Ascending aorta (tissue), 2 donors: ENCODE measurements at regions of chr12 and their contacts with region 1.

Region 1: DNA sequence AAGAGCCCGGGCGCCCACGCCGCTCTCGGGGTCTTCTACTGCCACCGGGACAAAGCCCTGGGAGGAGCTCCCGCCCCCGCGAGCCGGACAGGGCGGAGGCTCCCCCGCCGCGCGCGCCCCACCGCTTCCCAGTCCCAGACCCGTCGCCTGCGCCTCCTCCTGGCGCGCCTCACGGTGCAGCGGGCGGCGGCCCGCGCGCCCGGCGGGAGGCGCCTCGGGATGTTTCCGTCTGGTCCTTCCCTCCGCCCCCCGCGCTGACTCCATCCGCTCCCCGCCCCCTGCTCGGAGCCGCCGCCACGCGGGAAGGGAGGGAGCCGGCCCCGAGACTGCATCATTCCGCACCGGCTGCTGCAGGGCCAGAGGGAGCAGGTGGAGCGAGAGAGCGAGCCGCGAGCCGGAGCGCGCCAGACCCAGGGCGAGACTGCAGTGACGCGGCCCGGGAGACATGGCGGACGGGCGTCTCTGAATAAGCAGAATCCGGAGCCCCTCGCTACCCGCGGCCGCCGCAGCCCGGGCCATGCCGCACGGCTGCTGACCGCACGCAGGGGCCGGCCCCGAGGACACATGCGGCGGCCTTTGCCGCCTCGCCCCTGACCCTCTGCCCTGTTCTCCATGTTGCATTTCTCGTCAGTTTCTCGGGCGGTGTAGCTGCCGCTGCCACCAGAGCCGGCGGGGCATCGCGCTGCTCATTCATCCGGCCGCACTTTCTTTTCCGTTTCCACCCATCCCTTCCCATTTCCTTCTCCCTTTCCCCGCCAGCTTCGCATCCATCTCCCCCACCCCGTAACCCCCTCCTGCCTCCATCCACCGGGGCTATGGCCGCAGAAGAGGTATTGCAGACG is at the start of gene BICD1:
- DNase-seq: peak; percentile 68 to 96
- H3K4me3 ChIP-seq: peak within 1 kb of the TSS; percentile 76 to 99
- H3K27ac ChIP-seq: peak within 1 kb of the TSS; percentile 86 to 95
- H3K4me1 ChIP-seq: peaks cover 0 to 5% of the 10 kb centered on the region in 2 donors
- H3K27me3 ChIP-seq: no peaks in the 10 kb centered on the region
- CTCF ChIP-seq: peak; percentile 29 to 37 (median 33)
- total RNA-seq, gene BICD1: 33.8 TPM

Region 2: GRCh38 chr12:31659087-31659933 is 447.4 kb before region 1 on chr12 and contains the start of gene ETFBKMT:
- intact Hi-C with region 1: loop called (anchors 5 kb)
- DNase-seq: peak; percentile 67 to 94
- H3K4me3 ChIP-seq: peak within 1 kb of the TSS; percentile 68 to 82
- H3K27ac ChIP-seq: peak within 1 kb of the TSS; percentile 87 to 95
- H3K4me1 ChIP-seq: peaks cover 0 to 3% of the 10 kb centered on the region in 2 donors
- H3K27me3 ChIP-seq: no peaks in the 10 kb centered on the region
- CTCF ChIP-seq: peak in 2 of 3 experiments; percentile 27 to 50
- total RNA-seq, gene ETFBKMT: 0.64 TPM

Region 3: DNA sequence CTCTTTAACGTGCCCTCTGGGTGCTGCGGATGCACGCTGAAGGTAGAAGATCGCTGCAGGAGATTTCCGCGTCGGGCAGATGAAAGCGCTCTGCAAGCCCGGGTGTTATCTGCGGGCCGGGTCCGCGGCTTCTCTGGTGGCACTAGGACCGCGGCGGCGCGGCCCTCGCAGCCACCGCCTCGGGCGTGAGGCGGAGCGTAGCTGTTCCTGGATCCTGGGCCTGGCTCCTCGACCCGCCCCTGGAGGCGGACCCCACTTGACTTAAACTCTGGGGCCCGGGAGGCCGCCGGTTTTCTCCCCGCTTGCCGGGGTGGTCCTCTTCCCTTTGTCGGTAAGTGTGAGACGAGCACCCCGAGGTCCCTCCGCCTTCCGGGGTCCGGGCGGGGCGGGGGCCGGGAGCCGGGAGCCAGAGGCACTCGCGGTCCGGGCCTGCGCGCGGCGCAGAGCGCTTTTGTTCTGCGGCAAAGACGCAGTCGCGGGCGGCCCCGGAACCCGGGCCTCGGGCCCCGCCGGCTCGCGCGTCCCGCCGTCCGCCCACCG is 147.5 kb before region 1 on chr12 and contains the start of gene RESF1:
- intact Hi-C with region 1: loop called (anchors 2 kb)
- DNase-seq: peak; percentile 64 to 93
- H3K4me3 ChIP-seq: peak within 1 kb of the TSS; percentile 82 to 85
- H3K27ac ChIP-seq: peak within 1 kb of the TSS; percentile 82 to 96
- H3K4me1 ChIP-seq: peaks cover 3 to 17% of the 10 kb centered on the region in 2 donors
- H3K27me3 ChIP-seq: no peaks in the 10 kb centered on the region
- CTCF ChIP-seq: no peak
- total RNA-seq, gene RESF1: 26.0 TPM

Region 4: GRCh38 chr12:31989571-31990362 is 117.0 kb before region 1 on chr12:
- intact Hi-C with region 1: no loop called
- DNase-seq: no peak
- H3K4me3 ChIP-seq: no peak overlapping the region
- H3K27ac ChIP-seq: no peak overlapping the region
- H3K4me1 ChIP-seq: no peaks in the 10 kb centered on the region
- H3K27me3 ChIP-seq: no peaks in the 10 kb centered on the region
- CTCF ChIP-seq: no peak

Region 5: GRCh38 chr12:32533971-32534590 is 427.3 kb after region 1 on chr12:
- intact Hi-C with region 1: loop called (anchors 10 kb)
- DNase-seq: peak in 1 of 2 donors; percentile 90
- H3K4me3 ChIP-seq: peak overlapping the region; percentile 48 to 67
- H3K27ac ChIP-seq: peak overlapping the region; percentile 74 to 85
- H3K4me1 ChIP-seq: peaks cover 6 to 28% of the 10 kb centered on the region in 2 donors
- H3K27me3 ChIP-seq: no peaks in the 10 kb centered on the region
- CTCF ChIP-seq: no peak

Region 6: DNA sequence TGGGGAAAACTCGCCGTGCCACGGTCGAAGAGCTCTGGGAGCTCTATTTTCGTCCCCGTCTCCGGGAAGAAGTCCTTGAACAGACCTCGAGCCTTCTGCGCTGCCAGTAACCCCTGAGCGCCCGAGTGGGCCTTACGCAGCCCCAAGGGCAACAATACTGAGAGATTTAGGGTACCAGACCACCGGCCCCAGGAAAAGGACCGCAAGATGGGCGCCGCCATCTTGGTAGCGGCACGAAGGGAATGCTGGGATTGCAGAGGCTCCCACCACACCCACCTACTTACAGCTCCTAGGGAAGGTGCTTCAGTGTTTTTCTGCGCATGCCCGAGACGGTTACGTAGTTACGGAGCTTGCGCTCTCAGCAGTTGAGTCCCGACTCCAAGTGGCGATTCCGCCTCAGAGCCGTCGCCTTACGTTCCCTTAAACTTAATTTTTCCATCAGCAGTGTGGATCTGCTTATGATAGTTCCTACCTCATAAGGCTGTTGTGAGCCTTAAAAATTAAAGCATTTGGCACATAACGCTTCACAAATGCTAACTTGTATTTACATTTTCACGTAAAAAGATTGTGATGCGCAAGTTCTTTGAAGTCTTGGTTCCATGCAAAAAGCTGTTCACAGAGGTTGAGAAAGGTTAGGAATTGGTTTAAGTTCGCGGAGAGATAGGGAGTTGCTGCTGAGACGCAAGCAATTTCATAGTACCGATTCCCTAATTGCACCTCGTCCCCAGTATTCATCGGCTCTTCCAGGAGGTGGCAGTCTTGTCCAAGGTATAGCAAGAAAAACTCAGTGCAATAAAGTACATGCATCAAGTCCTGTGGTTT is 649.1 kb after region 1 on chr12 and contains the start of gene YARS2:
- intact Hi-C with region 1: loop called (anchors 5 kb)
- DNase-seq: peak; percentile 75 to 97
- H3K4me3 ChIP-seq: peak within 1 kb of the TSS; percentile 95 to 99
- H3K27ac ChIP-seq: peak within 1 kb of the TSS; percentile 91 to 93
- H3K4me1 ChIP-seq: peaks cover 0 to 11% of the 10 kb centered on the region in 2 donors
- H3K27me3 ChIP-seq: no peaks in the 10 kb centered on the region
- CTCF ChIP-seq: peak; percentile 78 to 82 (median 80)
- total RNA-seq, gene YARS2: 15.8 TPM